MCF 10A (cell line): ENCODE measurements at regions of chr4 and their contacts with region 1.

Region 1: DNA sequence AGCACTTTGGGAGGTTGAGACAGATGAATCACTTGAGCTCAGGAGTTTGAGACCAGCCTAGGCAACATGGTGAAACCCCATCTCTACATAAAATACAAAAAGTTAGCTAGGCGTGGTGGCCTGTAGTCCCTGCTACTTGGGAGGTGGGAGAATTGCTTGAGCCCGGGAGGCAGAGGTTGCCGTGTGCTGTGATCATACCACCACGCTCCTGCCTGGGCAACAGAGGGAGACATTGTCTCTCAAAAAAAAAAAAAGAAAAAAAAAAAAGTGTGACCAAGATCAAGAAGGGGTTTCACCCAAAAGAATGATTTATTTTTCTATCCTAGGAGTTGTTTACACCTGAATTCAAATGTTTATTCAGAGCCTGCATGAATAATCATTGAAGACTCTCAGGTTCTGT is 572.4 kb upstream of the GALNT7 start:
- DNase-seq: no peak
- H3K4me3 Mint-ChIP-seq: no peak overlapping the region
- H3K27ac Mint-ChIP-seq: no peak overlapping the region
- H3K4me1 Mint-ChIP-seq: no peaks in the 10 kb centered on the region
- H3K27me3 Mint-ChIP-seq: peaks cover 82% of the 10 kb centered on the region
- CTCF ChIP-seq: no peak

Region 2: GRCh38 chr4:172521248-172521647 is 75.0 kb before region 1 on chr4:
- CTCF ChIA-PET with region 1: no interaction called
- POLR2A ChIA-PET with region 1: no interaction called
- intact Hi-C with region 1: no loop called
- DNase-seq: no peak
- H3K4me3 Mint-ChIP-seq: no peak overlapping the region
- H3K27ac Mint-ChIP-seq: no peak overlapping the region
- H3K4me1 Mint-ChIP-seq: no peaks in the 10 kb centered on the region
- H3K27me3 Mint-ChIP-seq: peaks cover 39% of the 10 kb centered on the region
- CTCF ChIP-seq: no peak

Region 3: GRCh38 chr4:172819353-172819752 is 223.1 kb after region 1 on chr4:
- CTCF ChIA-PET with region 1: no interaction called
- POLR2A ChIA-PET with region 1: no interaction called
- intact Hi-C with region 1: loop called (anchors 5 kb)
- DNase-seq: no peak
- H3K4me3 Mint-ChIP-seq: no peak overlapping the region
- H3K27ac Mint-ChIP-seq: no peak overlapping the region
- H3K4me1 Mint-ChIP-seq: no peaks in the 10 kb centered on the region
- H3K27me3 Mint-ChIP-seq: peaks cover 100% of the 10 kb centered on the region
- CTCF ChIP-seq: no peak